Left colon (tissue), 2 donors: ENCODE measurements at regions of chr3 and their contacts with region 1.

Region 1: DNA sequence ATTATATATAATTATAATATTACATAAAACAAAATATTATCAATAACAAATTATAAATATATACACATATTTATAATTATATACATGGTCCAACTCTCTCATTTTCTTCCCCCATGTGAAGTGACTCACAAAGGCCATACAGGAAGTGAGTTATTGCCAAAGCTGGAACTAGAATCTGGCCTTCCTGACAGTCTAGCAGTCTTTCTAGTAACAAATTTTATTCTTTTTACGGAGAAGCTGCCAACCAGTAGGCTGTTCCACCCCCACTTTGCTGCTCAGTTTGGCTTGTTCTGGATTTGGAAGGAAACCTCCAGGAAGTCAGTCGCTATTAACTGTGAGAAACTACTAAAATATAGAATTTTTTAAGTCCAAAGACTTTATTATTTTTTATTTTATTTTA is 79.6 kb downstream of the DHX36 start:
- DNase-seq: no peak
- ATAC-seq: no peak

Region 2: DNA sequence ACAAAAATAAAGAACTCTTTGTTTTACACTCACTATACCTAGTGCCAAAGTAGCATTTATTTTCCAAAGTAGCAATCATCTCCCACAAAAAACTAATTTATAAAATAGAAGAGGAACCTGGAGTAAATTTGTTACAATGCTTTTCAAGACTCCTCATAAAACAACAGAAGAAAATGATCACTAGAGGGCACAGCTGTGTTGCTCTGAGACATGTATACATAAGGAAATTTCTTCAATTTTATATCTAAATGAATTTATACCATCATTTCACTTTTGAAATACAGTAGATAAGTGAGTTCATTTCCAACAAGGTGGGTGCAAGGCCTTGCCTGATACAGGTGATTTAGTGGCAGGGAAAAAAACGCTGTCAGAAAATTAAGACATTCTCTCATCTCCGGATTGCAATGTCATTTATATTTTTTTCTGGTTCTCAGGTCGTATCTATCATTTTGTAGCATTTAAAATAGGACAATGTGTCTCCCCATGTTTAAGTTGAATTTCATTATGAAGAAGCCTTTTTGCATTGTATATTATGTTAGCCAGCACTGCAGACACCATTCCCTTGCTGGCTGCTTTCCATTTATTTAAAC is 148.7 kb before region 1 on chr3:
- intact Hi-C with region 1: loop called in 1 of 2 experiments (anchors 5 kb)
- DNase-seq: no peak
- ATAC-seq: peak; percentile 60

Region 3: GRCh38 chr3:154144825-154145465 is 99.7 kb before region 1 on chr3:
- intact Hi-C with region 1: no loop called
- DNase-seq: no peak
- ATAC-seq: no peak